ENCODE measurements at regions of chr13 and their contacts with region 1.

Region 1: DNA sequence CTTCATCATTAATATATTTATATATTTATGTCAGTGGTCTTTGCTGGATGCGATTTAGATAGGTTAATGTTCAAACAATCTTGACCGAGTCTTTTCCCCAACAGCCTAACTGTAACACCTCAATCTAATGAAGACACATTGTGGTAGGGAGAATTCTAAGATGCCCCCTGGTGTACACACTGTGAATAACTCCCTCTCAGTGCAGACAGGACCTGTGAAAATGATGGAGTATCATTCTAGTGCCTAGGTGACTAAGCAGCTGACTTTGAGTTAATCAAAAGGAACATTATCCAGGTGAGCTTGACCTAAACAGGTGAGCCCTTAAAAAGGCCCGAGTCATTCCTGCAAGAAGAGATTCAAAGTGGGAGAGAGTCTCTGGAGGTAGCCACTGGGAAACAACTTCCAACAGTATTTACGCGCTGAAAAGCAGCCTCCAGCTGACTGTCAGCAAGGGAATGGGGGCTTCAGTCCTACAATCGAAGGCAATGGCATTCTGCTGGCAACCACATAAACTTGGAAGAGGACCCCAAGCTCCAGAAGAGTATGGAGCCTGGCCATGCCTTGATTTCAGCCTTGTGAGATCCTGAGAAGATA is 28.0 kb upstream of the KBTBD7 start:
- DNase-seq: no peak

Region 2: DNA sequence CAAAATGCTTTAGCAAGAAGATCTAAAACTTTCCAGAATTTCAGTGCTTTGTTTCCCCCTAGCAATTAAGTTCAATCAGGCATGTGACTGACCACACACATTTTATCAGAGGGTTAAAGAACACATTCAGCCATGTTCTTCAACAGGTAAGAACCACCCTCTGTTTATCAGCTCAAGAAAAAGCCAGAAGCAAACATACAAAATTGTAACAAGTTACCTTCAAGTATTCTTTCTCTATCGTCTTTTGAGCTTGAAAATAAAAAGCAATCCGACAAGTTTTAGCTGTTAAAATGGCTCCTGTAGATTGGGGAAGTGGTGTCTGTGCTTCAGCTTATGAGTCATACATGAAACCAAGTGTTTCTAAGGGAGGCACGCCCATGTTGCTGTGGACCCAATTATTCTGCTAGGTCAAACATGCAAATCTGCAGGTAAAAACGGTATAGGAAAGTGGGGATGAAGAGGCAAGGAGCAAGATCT is 203.3 kb before region 1 on chr13 and contains the start of gene ELF1:
- intact Hi-C with region 1: no loop called
- DNase-seq: no peak
- total RNA-seq, gene ELF1: 56.2 to 56.3 TPM

Region 3: DNA sequence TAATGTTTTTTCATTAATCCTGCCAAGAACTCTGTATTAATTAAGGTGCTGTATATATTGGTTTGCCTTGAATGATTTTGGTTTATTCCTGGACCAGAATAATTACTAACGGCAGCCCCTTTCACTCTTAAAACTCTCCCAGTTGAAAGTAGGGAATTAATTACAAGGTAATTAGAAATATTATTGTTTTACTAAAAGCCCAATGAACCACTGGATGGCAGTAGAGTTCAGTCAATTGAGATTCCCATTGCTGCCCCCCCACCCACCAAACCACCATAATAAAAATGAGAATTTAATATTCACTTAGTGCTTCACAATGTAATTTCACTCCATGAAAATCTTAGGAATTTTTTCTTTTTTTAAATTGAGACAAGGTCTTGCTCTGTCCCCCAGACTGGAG is 147.3 kb before region 1 on chr13:
- intact Hi-C with region 1: loop called in 1 of 2 experiments (anchors 5 kb)
- DNase-seq: no peak